Mammary epithelial cell (primary cell): ENCODE measurements at regions of chr7 and their contacts with region 1.

Region 1: DNA sequence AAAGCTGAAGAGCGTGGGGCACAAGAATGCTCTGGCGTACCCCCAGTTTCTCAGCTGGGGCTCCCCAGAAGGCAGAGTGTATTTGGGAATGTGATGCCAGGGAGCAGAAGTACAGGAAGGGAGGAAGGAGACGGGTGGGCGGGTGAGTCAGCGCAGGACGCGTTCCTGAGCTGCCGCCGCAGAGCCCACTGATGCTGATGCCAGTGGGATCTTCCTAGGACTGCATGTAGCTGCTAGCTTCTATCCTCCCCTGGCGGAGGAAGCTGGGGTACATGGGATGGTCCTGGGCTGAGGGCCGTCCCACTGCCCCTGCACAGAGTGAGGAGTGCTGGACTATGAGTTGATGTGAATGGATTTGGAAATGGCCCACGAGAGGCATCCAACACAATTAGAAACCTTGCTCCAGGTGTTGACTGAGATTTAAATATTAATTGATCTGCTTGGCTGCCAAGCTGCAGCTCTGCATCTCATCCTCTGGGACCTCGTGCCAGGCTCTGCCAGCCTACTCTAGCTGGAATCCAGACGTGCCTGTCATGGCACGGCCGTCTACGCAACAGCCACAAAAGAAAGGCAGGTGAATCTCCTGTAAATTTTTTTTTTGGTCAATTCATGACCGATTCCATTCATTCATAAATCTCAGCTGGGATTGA is 66.2 kb upstream of the RHEB start:
- DNase-seq: peak; percentile 67
- H3K4me3 ChIP-seq: no peak overlapping the region
- H3K27ac ChIP-seq: peak overlapping the region; percentile 41
- H3K4me1 ChIP-seq: peaks cover 23% of the 10 kb centered on the region
- H3K27me3 ChIP-seq: no peaks in the 10 kb centered on the region
- CTCF ChIP-seq: peak; percentile 27 to 30

Region 2: DNA sequence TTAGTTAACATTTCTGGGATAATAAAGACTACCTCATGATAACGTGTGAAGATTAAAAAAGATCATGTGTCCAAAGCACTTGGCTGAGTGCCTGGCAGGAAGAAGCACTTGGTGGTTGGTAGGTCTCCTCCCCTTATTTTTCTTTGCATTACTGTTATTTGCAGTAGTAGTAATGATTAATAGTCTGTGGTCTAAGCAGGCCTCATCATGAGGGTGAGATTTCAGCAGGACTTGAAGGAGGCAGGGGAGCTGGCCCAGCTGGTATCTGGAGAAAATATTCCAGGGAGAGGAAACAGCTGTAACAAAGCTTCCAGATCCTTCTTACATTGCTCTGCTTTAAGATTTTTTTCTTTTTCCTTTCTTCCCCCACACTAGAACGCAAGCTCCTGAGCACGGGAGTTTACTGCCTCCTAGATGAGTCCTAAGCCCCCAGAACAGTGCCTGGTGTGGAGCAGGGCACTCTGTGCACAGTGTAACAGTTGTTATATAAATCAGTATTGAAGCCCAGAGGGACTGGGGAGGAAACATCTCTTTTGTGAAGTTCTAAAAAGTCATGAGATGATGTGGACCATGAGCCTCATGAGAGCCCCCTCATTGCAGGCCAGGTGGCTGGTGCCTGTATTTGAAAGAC is 35.1 kb before region 1 on chr7:
- CTCF ChIA-PET with region 1: no interaction called
- dilution Hi-C with region 1: loop called (anchors 5 kb)
- in situ Hi-C with region 1: no loop called
- intact Hi-C with region 1: no loop called
- DNase-seq: peak; percentile 77
- H3K4me3 ChIP-seq: no peak overlapping the region
- H3K27ac ChIP-seq: no peak overlapping the region
- H3K4me1 ChIP-seq: peaks cover 20% of the 10 kb centered on the region
- H3K27me3 ChIP-seq: no peaks in the 10 kb centered on the region
- CTCF ChIP-seq: no peak